Activated CD4-positive, alpha-beta T cell treated with anti-CD3 and anti-CD28 coated beads, Interleukin-2, amount 10 ng/mL, durations not matched to agents 24 days and 14 days (primary cell): ENCODE measurements at regions of chr2 and their contacts with region 1.

Region 1: GRCh38 chr2:46364797-46365457 is 67.7 kb downstream of the EPAS1 start:
- DNase-seq: peak; percentile 83
- H3K4me3 Mint-ChIP-seq: no peak overlapping the region
- H3K27ac Mint-ChIP-seq: no peak overlapping the region
- H3K4me1 Mint-ChIP-seq: peaks cover 36% of the 10 kb centered on the region
- H3K27me3 Mint-ChIP-seq: peaks cover 6% of the 10 kb centered on the region

Region 2: GRCh38 chr2:45993476-45993991 is 371.4 kb before region 1 on chr2:
- intact Hi-C with region 1: loop called (anchors 2 kb)
- DNase-seq: peak; percentile 89
- H3K4me3 Mint-ChIP-seq: no peak overlapping the region
- H3K27ac Mint-ChIP-seq: no peak overlapping the region
- H3K4me1 Mint-ChIP-seq: peaks cover 2% of the 10 kb centered on the region
- H3K27me3 Mint-ChIP-seq: peaks cover 2% of the 10 kb centered on the region

Region 3: DNA sequence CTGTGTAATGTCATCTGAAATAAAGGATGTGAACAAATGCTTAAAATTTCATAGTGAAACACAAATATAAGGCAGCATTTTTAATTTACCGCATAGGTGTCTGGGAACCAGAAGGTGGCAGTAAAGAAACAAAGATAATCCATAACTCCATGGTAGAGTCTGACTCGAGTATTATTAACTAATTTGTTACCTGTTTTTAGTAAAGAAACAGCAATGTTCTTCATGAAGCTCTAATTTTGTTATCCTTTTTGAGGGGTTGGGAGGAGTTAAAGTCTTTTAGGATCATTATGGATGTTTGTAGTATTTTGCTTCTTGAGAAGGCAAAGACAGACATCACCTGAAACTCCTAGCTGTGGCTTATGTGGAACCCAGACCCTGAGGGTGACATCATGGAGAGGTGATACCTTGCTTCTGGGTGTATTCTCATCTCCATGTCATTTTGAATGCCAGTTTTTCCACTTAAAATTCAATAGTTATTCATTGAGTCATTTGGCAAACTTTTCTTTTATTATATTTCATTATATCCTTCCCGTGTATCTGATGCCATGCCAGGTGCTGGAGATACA is 353.9 kb before region 1 on chr2:
- intact Hi-C with region 1: loop called (anchors 1 kb)
- DNase-seq: no peak
- H3K4me3 Mint-ChIP-seq: no peak overlapping the region
- H3K27ac Mint-ChIP-seq: no peak overlapping the region
- H3K4me1 Mint-ChIP-seq: peaks cover 16% of the 10 kb centered on the region
- H3K27me3 Mint-ChIP-seq: no peaks in the 10 kb centered on the region

Region 4: GRCh38 chr2:46062637-46063412 is 302.1 kb before region 1 on chr2:
- intact Hi-C with region 1: loop called (anchors 1 kb)
- DNase-seq: peak; percentile 92
- H3K4me3 Mint-ChIP-seq: no peak overlapping the region
- H3K27ac Mint-ChIP-seq: no peak overlapping the region
- H3K4me1 Mint-ChIP-seq: peaks cover 20% of the 10 kb centered on the region
- H3K27me3 Mint-ChIP-seq: no peaks in the 10 kb centered on the region

Region 5: GRCh38 chr2:46187112-46187618 is 177.8 kb before region 1 on chr2:
- intact Hi-C with region 1: loop called (anchors 2 kb)
- DNase-seq: peak; percentile 84
- H3K4me3 Mint-ChIP-seq: peak overlapping the region; percentile 80
- H3K27ac Mint-ChIP-seq: peak overlapping the region; percentile 88
- H3K4me1 Mint-ChIP-seq: peaks cover 13% of the 10 kb centered on the region
- H3K27me3 Mint-ChIP-seq: peaks cover 2% of the 10 kb centered on the region

Region 6: GRCh38 chr2:46329803-46330775 is 34.8 kb before region 1 on chr2:
- intact Hi-C with region 1: loop called (anchors 5 kb)
- DNase-seq: no peak
- H3K4me3 Mint-ChIP-seq: no peak overlapping the region
- H3K27ac Mint-ChIP-seq: peak overlapping the region; percentile 17
- H3K4me1 Mint-ChIP-seq: peaks cover 16% of the 10 kb centered on the region
- H3K27me3 Mint-ChIP-seq: peaks cover 19% of the 10 kb centered on the region

Region 7: DNA sequence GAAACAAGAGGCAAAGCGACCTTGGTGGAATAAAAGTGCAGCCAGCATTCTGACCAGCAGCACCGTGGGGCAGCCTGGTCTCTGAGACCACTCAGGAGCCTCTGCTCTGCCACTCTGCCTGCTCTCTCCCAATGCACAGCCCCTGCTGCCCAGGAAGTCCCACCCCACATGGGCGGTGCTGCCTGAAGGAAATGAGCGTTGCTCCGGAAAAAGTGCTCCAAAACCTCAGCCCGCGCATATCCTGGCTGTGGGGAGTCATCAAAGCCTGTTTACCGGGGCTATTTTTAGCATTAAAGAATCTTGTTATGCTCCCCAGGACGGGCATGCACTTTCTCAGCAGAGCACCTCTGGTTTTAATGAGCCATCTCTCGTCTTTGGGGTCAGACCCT is 13.2 kb before region 1 on chr2:
- intact Hi-C with region 1: loop called (anchors 1 kb)
- DNase-seq: peak; percentile 93
- H3K4me3 Mint-ChIP-seq: peak overlapping the region; percentile 78
- H3K27ac Mint-ChIP-seq: peak overlapping the region; percentile 94
- H3K4me1 Mint-ChIP-seq: peaks cover 63% of the 10 kb centered on the region
- H3K27me3 Mint-ChIP-seq: no peaks in the 10 kb centered on the region